K562 (cell line): ENCODE measurements at regions of chr12 and their contacts with region 1.

Region 1: DNA sequence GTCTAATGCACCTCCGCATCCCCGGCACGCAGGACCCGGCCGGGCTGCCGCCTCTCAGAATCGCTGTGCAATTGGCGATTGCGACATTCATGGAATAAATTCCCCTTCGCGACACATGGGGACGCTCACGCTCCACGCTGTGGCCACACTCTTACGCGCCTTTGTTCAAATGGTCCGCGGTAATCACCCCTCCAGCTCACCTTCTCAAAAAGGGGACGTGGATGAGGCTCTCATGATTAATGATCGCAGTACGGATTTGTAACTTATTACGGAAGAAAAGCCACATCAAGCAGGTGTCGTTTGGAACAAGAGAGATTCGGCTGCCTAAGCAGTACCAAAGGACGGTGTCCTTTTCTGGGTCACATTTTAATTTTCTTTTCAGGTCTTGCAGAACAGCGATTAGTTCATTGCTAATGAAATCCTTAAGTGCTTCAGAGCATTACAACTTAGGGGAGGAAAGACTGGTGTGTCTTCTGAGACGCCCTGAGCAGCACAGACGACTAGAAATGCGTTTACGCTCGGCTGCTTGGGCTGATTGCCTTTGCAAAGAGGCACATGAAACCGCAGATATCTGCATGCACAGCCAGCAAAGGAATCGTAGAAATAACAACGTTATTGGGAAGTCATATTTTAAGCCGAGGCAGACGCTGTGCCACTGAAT is 37.3 kb upstream of the ADGRD1 start:
- DNase-seq: peak; percentile 56 to 78 (median 62)
- ATAC-seq: peak; percentile 96
- H3K4me3 ChIP-seq: no peak overlapping the region
- H3K27ac ChIP-seq: no peak overlapping the region
- H3K4me1 ChIP-seq: peaks cover 2 to 3% of the 10 kb centered on the region in 2 experiments; a peak in 1 of 5 replicates
- H3K27me3 ChIP-seq: peaks cover 33 to 54% of the 10 kb centered on the region in 2 experiments
- CTCF ChIP-seq: peak; percentile 95 to 97 (median 96)
- EP300 ChIP-seq: no peak
- POLR2A ChIP-seq: no peak
- RAD21 ChIP-seq: peak; percentile 94 to 97

Region 2: DNA sequence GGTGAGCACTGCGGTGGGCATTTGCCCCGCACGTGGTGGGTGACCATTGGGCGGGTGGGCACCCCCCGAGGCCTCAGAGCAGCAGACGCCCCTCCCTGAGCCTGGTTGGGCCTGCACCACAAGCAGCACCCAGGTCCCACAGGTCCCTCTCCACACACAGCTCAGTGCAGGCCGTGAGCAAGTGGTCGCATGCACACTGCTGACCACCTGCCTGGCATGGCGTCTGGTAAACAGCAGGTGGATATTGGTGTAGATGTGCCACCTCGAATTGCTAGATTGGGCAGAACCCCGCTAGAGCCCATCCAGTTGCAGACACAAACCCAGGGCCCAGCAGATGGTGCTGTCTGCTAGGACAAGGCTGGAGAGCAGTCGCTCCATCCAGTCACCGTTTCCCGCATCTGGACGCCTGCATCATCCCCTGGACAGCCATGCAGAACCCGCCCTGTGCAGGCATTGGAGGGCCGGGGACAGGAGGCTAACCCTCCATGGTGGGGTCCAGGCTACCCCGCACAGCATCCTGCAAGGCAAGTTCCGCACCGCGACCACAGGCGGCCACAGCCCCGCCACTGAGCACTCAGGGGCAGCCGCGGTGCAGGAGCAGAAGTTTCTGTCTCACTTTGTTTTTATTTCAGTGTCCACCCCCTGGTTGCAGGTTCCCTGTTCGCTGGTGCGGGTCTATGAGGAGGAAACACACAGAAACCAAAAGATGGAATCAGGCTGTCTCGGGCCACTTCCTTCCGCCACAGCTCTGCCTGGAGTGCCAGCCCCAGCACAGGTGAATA is 154.7 kb before region 1 on chr12:
- CTCF ChIA-PET with region 1: no interaction called
- POLR2A ChIA-PET with region 1: no interaction called
- in situ Hi-C with region 1: no loop called
- intact Hi-C with region 1: loop called (anchors 10 kb)
- DNase-seq: peak; percentile 47 to 72 (median 61)
- ATAC-seq: peak; percentile 94
- H3K4me3 ChIP-seq: no peak overlapping the region
- H3K27ac ChIP-seq: no peak overlapping the region
- H3K4me1 ChIP-seq: peaks cover 0 to 7% of the 10 kb centered on the region in 2 experiments; a peak in 1 of 5 replicates
- H3K27me3 ChIP-seq: peaks cover 10 to 34% of the 10 kb centered on the region in 2 experiments; a peak in 4 of 5 replicates
- CTCF ChIP-seq: peak; percentile 78 to 79 (median 78)
- EP300 ChIP-seq: no peak
- POLR2A ChIP-seq: no peak
- RAD21 ChIP-seq: peak; percentile 60 to 89

Region 3: DNA sequence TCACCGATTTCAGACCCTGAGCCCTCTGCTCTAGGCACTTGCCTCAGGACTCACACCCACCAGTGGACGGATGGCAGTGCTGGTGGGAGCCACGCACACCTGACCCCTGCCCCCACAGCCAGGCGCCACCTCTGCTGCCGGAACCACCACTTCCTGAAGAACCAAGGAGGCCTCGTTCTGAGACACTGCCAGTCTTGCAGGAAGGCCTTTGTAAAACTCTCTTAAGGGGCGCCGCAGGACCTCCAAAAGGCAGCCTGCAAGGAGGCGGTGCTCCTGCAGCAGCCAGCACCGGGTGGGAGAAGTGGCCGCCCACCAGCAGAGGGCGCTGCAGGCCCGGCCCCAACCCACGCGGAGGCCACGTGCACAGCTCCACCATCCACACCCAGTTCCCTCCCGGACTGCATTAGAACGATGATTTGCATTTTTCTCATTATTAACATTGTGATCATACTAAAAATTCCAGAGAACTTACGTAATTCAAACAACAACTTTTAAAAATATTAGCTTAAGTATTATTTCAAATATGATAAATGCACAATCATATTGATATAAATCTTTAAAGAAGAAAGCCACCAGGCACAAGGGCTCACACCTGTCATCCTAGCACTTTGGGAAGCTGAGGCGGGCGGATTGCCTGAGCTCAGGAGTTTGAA is 90.1 kb before region 1 on chr12:
- CTCF ChIA-PET with region 1: no interaction called
- POLR2A ChIA-PET with region 1: no interaction called
- in situ Hi-C with region 1: no loop called
- intact Hi-C with region 1: no loop called
- DNase-seq: peak; percentile 87 to 89 (median 88)
- ATAC-seq: peak; percentile 93
- H3K4me3 ChIP-seq: no peak overlapping the region
- H3K27ac ChIP-seq: peak overlapping the region; percentile 58
- H3K4me1 ChIP-seq: peaks cover 37% of the 10 kb centered on the region in 2 experiments; a peak in 4 of 5 replicates
- H3K27me3 ChIP-seq: no peaks in the 10 kb centered on the region
- CTCF ChIP-seq: peak; percentile 96 to 98 (median 96)
- EP300 ChIP-seq: peak; percentile 72
- POLR2A ChIP-seq: no peak
- RAD21 ChIP-seq: peak; percentile 73 to 86

Region 4: DNA sequence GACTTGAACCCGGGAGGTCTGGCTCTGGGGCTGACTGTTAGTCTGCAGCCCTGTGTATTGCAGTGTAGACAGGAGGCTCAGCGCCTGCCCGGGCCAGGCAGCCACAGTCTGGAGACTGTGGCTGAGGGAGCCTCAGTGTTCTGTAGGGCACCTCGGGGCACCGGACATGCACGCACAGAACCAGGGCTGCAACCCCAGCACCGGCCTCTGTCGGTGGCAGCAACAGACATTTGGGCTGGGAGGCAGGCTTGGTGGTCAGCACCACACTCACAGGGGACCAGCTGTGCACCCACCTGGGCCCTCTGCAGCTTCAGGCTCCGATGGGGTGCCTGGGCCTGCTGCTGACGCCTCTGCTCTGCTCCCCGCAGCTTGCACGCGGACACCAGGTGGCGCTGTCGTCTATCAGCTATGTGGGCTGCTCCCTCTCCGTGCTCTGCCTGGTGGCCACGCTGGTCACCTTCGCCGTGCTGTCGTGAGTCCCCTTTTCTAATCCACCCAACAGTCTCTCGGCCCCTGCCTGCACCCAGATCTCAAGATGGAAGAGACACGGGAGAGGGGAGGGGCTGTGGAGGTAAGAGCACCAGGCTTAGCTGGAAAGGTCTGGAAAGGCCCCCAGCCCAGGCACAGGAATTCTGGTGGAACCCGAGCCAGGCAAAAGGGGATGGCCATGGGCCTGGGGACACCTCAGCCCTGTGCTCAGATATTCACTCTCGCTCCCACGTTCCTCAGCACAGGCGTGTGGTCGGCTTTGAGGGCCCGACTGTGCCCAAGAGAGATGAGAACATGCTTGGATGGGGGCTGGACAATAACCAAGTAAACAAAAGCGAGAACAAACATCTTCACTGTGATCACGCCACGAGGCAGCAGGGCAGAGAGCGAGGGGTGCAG is 188.3 kb after region 1 on chr12:
- CTCF ChIA-PET with region 1: no interaction called
- POLR2A ChIA-PET with region 1: no interaction called
- in situ Hi-C with region 1: no loop called
- intact Hi-C with region 1: loop called (anchors 2 kb)
- DNase-seq: peak; percentile 82 to 89 (median 84)
- ATAC-seq: peak; percentile 100
- H3K4me3 ChIP-seq: no peak overlapping the region
- H3K27ac ChIP-seq: no peak overlapping the region
- H3K4me1 ChIP-seq: peaks cover 0 to 27% of the 10 kb centered on the region in 2 experiments; a peak in 2 of 5 replicates
- H3K27me3 ChIP-seq: peaks cover 0 to 7% of the 10 kb centered on the region in 2 experiments; a peak in 1 of 5 replicates
- CTCF ChIP-seq: peak; percentile 94 to 98 (median 96)
- EP300 ChIP-seq: no peak
- POLR2A ChIP-seq: no peak
- RAD21 ChIP-seq: peak; percentile 92 to 93

Region 5: DNA sequence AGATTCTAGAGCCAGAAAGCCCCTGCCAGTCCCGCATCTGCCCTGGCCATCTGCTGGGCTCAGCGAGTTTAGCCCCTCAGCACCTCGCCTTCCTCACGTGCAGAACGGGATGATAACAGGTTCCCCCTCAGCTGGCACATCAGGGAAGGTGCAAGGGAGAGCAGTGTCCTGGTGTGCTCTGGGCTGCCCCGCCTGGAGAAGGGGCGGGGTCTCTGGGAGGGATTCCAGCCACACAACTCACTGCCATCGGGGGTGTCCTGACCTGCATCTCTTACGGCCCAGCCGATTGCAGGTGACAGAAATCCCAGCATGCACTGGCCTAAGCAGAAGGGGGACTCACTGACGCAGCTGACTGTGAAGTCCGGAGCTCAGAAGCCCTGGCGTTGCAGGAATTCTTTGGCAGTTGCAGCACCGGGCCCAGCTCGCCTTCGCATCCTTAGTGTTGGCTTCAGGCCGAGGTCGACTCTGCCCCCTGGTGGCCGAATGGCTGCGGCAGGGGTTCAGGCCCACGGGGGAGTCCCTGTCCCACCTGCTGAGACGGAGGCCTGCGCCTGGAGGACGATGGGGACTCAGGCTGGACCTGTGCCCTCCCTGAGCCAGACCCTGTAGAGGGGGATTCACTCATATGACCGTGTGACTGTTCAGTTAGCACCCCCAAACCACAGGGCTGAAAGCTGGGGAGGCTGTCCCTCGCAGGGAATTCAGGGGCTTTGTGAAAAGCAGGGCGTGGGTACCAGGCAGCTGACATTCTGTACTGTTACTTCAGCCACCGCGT is 215.9 kb after region 1 on chr12:
- CTCF ChIA-PET with region 1: interaction called, 17 read pairs
- POLR2A ChIA-PET with region 1: no interaction called
- in situ Hi-C with region 1: loop called (anchors 10 kb)
- intact Hi-C with region 1: loop called (anchors 1 kb)
- DNase-seq: peak; percentile 75 to 84 (median 82)
- ATAC-seq: peak; percentile 97
- H3K4me3 ChIP-seq: no peak overlapping the region
- H3K27ac ChIP-seq: no peak overlapping the region
- H3K4me1 ChIP-seq: peaks cover 0 to 18% of the 10 kb centered on the region in 2 experiments; a peak in 3 of 5 replicates
- H3K27me3 ChIP-seq: peaks cover 0 to 31% of the 10 kb centered on the region in 2 experiments; a peak in 3 of 5 replicates
- CTCF ChIP-seq: peak; percentile 78 to 90 (median 80)
- EP300 ChIP-seq: no peak
- POLR2A ChIP-seq: no peak
- RAD21 ChIP-seq: peak; percentile 74 to 82

Region 6: GRCh38 chr12:131673888-131674257 is 757.5 kb after region 1 on chr12:
- CTCF ChIA-PET with region 1: no interaction called
- POLR2A ChIA-PET with region 1: no interaction called
- in situ Hi-C with region 1: no loop called
- intact Hi-C with region 1: no loop called
- DNase-seq: no peak
- ATAC-seq: no peak
- H3K4me3 ChIP-seq: no peak overlapping the region
- H3K27ac ChIP-seq: no peak overlapping the region
- H3K4me1 ChIP-seq: peaks cover 0 to 10% of the 10 kb centered on the region in 2 experiments; a peak in 1 of 5 replicates
- H3K27me3 ChIP-seq: peaks cover 27 to 48% of the 10 kb centered on the region in 2 experiments
- CTCF ChIP-seq: no peak
- EP300 ChIP-seq: no peak
- POLR2A ChIP-seq: no peak
- RAD21 ChIP-seq: no peak